PC-9 (cell line): ENCODE measurements at regions of chr9 and their contacts with region 1.

Region 1: GRCh38 chr9:93119953-93120845 is 13.9 kb downstream of the NINJ1 start:
- DNase-seq: peak; percentile 94 to 98
- H3K4me3 ChIP-seq: no peak overlapping the region
- H3K27ac ChIP-seq: peak overlapping the region; percentile 91
- H3K4me1 ChIP-seq: peaks cover 39% of the 10 kb centered on the region
- H3K27me3 ChIP-seq: no peaks in the 10 kb centered on the region
- CTCF ChIP-seq: peak; percentile 61

Region 2: DNA sequence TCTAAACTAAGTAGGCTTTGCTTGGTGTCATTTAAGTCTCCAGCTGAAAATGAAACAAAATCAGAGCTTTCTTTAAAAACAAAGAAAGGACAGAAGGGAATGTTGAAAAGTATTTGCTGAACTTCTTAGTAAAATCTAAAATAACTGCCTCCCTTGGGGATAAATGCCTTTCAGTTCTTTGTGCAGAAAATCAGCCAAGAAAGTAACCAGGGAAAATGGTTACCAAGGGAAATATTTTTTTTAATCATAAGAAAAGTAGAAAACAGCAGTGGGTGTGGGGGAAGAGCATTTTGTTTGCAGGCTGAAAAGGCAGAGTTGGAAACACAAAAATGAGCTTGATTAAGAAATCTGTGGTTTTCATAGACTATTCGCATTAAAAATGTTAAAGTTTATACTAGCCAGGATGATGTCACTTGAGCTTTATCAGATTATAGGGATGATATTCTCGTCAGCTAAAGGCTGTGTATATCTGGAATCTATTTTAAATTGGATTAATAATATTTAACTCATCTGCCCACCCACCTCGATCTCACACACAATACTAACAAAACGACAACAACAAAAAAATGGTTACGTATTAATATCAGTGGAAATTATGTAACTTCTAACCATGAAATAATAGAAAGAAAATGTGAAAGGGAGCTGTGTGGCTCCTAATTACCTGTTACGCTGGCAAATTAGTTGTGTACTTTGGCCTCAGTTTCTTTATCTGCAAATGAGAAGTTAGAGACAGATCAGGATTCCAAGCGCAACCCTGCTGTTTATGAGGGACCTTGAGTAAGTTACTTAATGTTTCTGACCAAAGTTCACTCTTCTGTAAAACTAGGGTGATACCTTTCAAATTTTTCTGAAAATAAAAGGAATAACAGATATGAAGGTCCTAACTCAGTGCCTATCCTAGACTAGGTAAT is 584.0 kb before region 1 on chr9 and contains the start of gene ECM2:
- CTCF ChIA-PET with region 1: no interaction called
- POLR2A ChIA-PET with region 1: interaction called, 20 read pairs
- intact Hi-C with region 1: no loop called
- DNase-seq: no peak
- H3K4me3 ChIP-seq: no peak within 1 kb of the TSS
- H3K27ac ChIP-seq: no peak within 1 kb of the TSS
- H3K4me1 ChIP-seq: no peaks in the 10 kb centered on the region
- H3K27me3 ChIP-seq: no peaks in the 10 kb centered on the region
- CTCF ChIP-seq: no peak
- total RNA-seq, gene ECM2: 1.9 and 3.1 TPM in 2 replicates

Region 3: GRCh38 chr9:92877531-92878430 is 242.4 kb before region 1 on chr9 and contains the start of gene ZNF484:
- CTCF ChIA-PET with region 1: no interaction called
- POLR2A ChIA-PET with region 1: interaction called, 26 read pairs
- intact Hi-C with region 1: no loop called
- DNase-seq: peak; percentile 94 to 99
- H3K4me3 ChIP-seq: peak within 1 kb of the TSS; percentile 68
- H3K27ac ChIP-seq: peak within 1 kb of the TSS; percentile 72
- H3K4me1 ChIP-seq: peaks cover 28% of the 10 kb centered on the region
- H3K27me3 ChIP-seq: no peaks in the 10 kb centered on the region
- CTCF ChIP-seq: no peak
- total RNA-seq, gene ZNF484: 8.4 and 10.8 TPM in 2 replicates

Region 4: GRCh38 chr9:92970467-92970923 is 149.7 kb before region 1 on chr9:
- CTCF ChIA-PET with region 1: no interaction called
- POLR2A ChIA-PET with region 1: interaction called, 19 read pairs
- intact Hi-C with region 1: no loop called
- DNase-seq: peak; percentile 76 to 85
- H3K4me3 ChIP-seq: no peak overlapping the region
- H3K27ac ChIP-seq: peak overlapping the region; percentile 30; the same call in 1 of the 2 replicates
- H3K4me1 ChIP-seq: peaks cover 54% of the 10 kb centered on the region
- H3K27me3 ChIP-seq: no peaks in the 10 kb centered on the region
- CTCF ChIP-seq: no peak

Region 5: DNA sequence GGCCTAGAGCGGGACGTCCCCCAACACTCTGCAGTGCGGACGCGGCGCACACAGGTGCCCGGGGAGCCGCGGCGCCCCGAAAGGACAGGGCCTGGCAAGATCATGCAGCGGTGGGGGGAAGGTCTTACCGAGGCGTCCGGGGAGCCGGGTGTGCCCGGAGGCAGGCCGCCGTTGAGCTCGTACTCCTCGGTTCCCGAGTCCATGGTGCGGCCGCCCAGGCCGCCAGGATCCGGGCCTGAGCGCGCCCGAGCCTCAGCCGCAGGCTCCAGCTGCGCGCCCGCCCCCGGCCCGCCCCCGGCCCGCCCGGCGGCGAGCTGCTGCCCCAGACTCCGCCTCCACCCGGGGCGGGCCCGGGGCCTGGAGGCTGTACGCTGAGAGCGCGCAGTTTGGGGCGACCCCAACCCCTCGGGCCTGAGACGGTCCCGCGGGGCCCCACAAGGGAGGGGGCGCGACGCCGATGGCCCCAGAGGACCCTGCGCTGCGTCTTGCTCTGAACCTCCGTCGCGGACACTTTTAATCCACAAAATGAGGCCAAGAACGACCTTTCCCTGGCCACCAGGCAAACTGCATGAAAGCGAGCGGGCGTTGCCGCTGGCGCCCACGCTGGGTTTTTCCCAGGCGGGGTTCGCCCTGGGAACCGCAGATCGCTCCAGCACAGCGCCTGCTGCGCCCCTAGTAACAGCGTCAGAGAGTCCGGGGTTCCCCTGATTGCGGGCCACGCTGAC is 14.0 kb after region 1 on chr9 and contains the start of gene NINJ1:
- CTCF ChIA-PET with region 1: no interaction called
- POLR2A ChIA-PET with region 1: interaction called, 14 read pairs
- intact Hi-C with region 1: loop called (anchors 2 kb)
- DNase-seq: peak in 1 of 2 experiments; percentile 76
- H3K4me3 ChIP-seq: peak within 1 kb of the TSS; percentile 88
- H3K27ac ChIP-seq: peak within 1 kb of the TSS; percentile 38
- H3K4me1 ChIP-seq: peaks cover 26% of the 10 kb centered on the region
- H3K27me3 ChIP-seq: no peaks in the 10 kb centered on the region
- CTCF ChIP-seq: no peak
- total RNA-seq, gene NINJ1: 115 TPM in 2 replicates

Region 6: GRCh38 chr9:93231121-93231694 is 111.0 kb after region 1 on chr9:
- CTCF ChIA-PET with region 1: no interaction called
- POLR2A ChIA-PET with region 1: interaction called, 13 read pairs
- intact Hi-C with region 1: no loop called
- DNase-seq: peak; percentile 50 to 76
- H3K4me3 ChIP-seq: no peak overlapping the region
- H3K27ac ChIP-seq: no peak overlapping the region
- H3K4me1 ChIP-seq: peaks cover 27% of the 10 kb centered on the region
- H3K27me3 ChIP-seq: no peaks in the 10 kb centered on the region
- CTCF ChIP-seq: no peak